ENCODE measurements at regions of chr4 and their contacts with region 1.

Region 1: DNA sequence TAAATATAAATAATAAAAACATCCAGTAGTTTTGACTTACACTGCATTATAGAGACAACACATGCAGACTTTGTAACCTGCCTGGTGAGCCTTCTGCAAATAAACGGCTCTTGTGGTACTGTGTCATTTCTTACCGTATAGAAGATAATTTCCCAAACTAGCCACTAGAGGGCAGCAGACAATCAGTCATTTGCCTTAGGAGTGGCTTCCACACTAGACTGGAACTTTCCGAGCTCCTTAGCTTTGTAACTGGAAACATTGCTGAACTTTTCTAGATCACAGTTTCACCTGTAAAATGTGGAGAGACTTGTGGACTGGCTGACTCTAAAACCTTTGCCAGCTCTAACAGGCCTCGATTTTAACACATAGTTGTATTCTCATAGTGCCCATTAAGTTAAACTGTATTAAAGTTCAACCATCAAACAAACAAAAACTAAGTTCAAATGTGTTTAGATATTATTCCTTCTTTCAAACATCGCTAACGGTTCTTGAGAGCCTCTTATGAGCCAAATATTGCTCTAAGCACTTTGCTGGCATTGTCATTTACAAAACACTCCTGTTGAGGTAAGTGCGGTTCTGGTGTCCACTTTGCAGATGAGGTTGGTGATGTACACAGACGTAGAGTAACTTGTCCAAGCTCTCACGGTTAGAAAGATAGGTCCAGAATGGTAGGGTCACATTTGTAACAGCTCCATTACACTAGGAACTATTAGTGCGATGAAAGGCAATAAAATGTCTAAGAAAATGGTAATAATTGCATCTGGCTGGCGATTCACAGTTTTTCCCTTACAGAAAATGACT is 345.5 kb downstream of the ANK2 start:
- DNase-seq: peak; percentile 48
- H3K4me3 Mint-ChIP-seq: no peak overlapping the region
- H3K27ac Mint-ChIP-seq: no peak overlapping the region
- H3K4me1 Mint-ChIP-seq: no peaks in the 10 kb centered on the region
- H3K27me3 Mint-ChIP-seq: peaks cover 2% of the 10 kb centered on the region

Region 2: DNA sequence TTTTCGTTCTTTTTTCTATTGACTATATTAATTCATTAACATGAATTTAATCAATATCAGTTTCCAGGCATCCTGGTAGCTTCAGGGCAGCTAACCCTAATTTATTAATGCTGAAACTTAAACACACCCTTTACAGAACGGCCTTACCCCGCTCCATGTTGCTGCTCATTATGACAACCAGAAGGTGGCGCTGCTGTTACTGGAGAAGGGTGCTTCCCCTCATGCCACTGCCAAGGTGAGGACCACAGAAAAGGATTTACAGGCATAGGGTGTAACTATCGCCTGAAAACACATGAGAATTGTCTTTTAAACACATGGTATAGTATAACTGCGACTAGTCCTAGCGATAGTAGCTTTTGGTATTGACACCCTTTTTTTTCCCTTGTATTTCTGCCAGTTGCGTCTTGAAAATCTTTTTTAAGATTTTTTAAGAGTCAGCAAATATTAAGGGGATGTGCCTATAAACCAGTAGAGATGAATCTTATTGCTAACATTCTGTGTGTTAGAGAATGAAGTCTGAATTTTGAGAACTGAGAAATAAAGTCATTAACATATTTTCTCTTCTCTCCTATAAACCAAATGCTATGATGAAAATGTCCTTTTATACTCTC is 116.5 kb before region 1 on chr4:
- intact Hi-C with region 1: loop called (anchors 1 kb)
- DNase-seq: peak; percentile 31
- H3K4me3 Mint-ChIP-seq: no peak overlapping the region
- H3K27ac Mint-ChIP-seq: no peak overlapping the region
- H3K4me1 Mint-ChIP-seq: no peaks in the 10 kb centered on the region
- H3K27me3 Mint-ChIP-seq: peaks cover 6% of the 10 kb centered on the region

Region 3: GRCh38 chr4:113539408-113539807 is 144.5 kb after region 1 on chr4:
- intact Hi-C with region 1: loop called (anchors 1 kb)
- DNase-seq: no peak
- H3K4me3 Mint-ChIP-seq: peak overlapping the region; percentile 29
- H3K27ac Mint-ChIP-seq: peak overlapping the region; percentile 80
- H3K4me1 Mint-ChIP-seq: peaks cover 39% of the 10 kb centered on the region
- H3K27me3 Mint-ChIP-seq: no peaks in the 10 kb centered on the region

Region 4: DNA sequence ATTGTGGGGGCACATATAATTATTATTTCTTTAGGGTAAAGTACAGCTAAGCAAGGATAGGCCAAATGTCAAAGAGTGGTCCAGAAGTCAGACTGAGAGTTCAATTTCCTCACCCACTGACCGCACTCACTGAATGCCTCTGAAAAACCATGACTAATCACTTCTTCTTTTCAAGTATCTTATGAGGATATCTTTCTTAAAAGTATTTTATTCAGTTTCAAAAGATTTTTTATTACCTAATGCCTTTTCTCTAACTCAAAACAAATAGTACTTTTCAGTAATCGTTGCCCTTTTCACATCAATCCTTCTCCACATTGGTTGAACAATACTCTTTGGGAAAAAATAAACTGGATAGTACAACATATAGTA is 428.3 kb after region 1 on chr4:
- intact Hi-C with region 1: loop called (anchors 5 kb)
- DNase-seq: no peak
- H3K4me3 Mint-ChIP-seq: no peak overlapping the region
- H3K27ac Mint-ChIP-seq: no peak overlapping the region
- H3K4me1 Mint-ChIP-seq: peaks cover 38% of the 10 kb centered on the region
- H3K27me3 Mint-ChIP-seq: no peaks in the 10 kb centered on the region

Region 5: GRCh38 chr4:114072781-114073180 is 677.9 kb after region 1 on chr4:
- intact Hi-C with region 1: loop called (anchors 1 kb)
- DNase-seq: no peak
- H3K4me3 Mint-ChIP-seq: no peak overlapping the region
- H3K27ac Mint-ChIP-seq: no peak overlapping the region
- H3K4me1 Mint-ChIP-seq: no peaks in the 10 kb centered on the region
- H3K27me3 Mint-ChIP-seq: peaks cover 30% of the 10 kb centered on the region

Region 6: DNA sequence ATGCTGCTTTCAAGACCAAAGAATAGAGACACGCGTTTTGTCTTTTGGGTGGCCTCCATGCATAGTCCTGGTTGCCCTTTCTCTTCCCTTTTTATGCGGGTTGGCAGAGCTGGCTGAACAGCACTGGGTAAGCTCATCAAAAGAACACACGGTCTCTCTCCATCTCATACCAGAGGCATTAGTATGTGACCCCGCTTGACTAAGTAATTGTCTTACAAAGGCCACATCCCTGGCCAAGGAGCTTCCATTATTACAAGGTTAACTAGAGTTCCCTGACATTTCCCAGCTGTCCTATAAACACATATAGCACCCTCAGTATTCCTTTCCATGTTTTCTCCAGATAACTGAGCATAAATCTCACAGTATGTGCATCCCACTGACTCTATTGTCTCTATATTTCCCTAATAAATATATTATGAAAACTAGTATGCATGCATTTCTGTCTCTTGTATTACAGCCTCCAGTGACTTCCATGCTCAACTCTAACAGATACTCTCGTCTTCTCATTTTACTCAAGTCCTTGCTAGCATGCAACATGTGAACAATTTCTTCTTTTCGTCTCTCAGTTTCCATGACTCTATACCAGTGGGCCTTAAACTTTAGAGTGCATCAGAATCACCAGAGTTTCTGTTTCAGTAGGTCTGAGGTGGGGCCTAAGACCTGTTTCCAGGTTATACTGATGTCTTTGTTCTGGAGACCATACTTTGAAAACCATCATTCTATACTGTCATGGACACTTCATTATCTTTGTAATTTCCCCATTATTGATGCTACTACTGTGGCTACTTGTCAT is 832.2 kb after region 1 on chr4:
- intact Hi-C with region 1: no loop called
- DNase-seq: no peak
- H3K4me3 Mint-ChIP-seq: no peak overlapping the region
- H3K27ac Mint-ChIP-seq: no peak overlapping the region
- H3K4me1 Mint-ChIP-seq: no peaks in the 10 kb centered on the region
- H3K27me3 Mint-ChIP-seq: peaks cover 2% of the 10 kb centered on the region

Region 7: DNA sequence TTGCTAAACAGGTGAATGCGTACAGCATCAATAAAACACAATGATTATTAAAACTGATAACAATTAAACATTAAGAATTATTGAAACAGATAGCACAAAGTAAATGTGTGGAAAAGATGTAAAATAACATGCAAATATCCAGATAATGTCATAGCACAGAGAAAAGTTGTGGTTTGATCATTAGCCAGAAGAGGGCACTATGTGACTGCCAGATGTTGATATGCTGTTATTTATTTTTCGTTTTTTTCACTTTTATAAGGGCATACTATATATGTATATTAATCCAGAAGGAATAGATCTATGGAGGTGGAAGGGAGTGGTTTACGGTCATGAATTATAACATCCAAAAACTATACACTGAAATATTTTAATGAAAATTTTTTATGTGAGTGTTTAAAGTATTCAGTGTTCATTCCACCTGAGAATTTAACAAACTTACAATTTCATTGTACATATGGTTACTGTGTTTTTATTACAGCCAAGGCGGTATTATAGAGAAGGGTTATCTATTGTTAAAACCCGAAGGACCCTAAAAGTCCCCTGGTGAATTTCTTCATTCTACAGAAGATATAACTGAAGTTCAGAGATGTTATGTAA is 991.8 kb after region 1 on chr4:
- intact Hi-C with region 1: loop called (anchors 1 kb)
- DNase-seq: no peak
- H3K4me3 Mint-ChIP-seq: no peak overlapping the region
- H3K27ac Mint-ChIP-seq: no peak overlapping the region
- H3K4me1 Mint-ChIP-seq: no peaks in the 10 kb centered on the region
- H3K27me3 Mint-ChIP-seq: peaks cover 2% of the 10 kb centered on the region

Region 8: DNA sequence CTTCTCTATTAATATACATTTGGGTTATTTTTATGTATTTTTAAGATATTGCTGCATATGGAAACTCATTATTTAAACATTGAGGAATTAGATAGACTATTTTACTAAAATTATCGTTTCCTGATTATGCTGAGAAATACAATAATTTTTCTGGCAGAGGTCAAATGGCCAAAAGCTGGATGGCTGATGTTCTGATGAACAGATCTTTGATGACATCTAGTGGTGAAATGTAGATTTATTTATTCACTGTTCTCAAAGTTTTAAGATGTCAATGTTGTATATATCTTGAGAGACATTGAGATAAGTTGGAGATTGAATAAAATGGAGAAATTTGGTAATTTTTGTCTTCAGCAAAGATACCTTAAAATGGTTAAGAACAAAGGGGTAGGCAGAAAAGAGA is 1299.8 kb after region 1 on chr4:
- intact Hi-C with region 1: loop called (anchors 1 kb)
- DNase-seq: no peak
- H3K4me3 Mint-ChIP-seq: no peak overlapping the region
- H3K27ac Mint-ChIP-seq: no peak overlapping the region
- H3K4me1 Mint-ChIP-seq: peaks cover 8% of the 10 kb centered on the region
- H3K27me3 Mint-ChIP-seq: no peaks in the 10 kb centered on the region